PC-3 (cell line): ENCODE measurements at regions of chr14 and their contacts with region 1.

Region 1: GRCh38 chr14:53953002-53953827 is 3.4 kb downstream of the BMP4 start:
- DNase-seq: peak; percentile 88
- ATAC-seq: peak; percentile 75
- H3K4me3 ChIP-seq: peak overlapping the region; percentile 91
- H3K27ac ChIP-seq: peak overlapping the region; percentile 31; the same call in 1 of the 2 replicates
- H3K4me1 ChIP-seq: 0 out of 2 replicates have a peak, but pooled peaks cover 4% of the 10 kb centered on the region
- H3K27me3 ChIP-seq: no peaks in the 10 kb centered on the region
- CTCF ChIP-seq: no peak

Region 2: GRCh38 chr14:53432378-53432802 is 520.8 kb before region 1 on chr14:
- CTCF ChIA-PET with region 1: no interaction called
- POLR2A ChIA-PET with region 1: no interaction called
- intact Hi-C with region 1: loop called (anchors 10 kb)
- DNase-seq: peak; percentile 77
- ATAC-seq: peak; percentile 95
- H3K4me3 ChIP-seq: no peak overlapping the region
- H3K27ac ChIP-seq: no peak overlapping the region
- H3K4me1 ChIP-seq: peaks cover 18% of the 10 kb centered on the region
- H3K27me3 ChIP-seq: no peaks in the 10 kb centered on the region
- CTCF ChIP-seq: peak; percentile 96

Region 3: DNA sequence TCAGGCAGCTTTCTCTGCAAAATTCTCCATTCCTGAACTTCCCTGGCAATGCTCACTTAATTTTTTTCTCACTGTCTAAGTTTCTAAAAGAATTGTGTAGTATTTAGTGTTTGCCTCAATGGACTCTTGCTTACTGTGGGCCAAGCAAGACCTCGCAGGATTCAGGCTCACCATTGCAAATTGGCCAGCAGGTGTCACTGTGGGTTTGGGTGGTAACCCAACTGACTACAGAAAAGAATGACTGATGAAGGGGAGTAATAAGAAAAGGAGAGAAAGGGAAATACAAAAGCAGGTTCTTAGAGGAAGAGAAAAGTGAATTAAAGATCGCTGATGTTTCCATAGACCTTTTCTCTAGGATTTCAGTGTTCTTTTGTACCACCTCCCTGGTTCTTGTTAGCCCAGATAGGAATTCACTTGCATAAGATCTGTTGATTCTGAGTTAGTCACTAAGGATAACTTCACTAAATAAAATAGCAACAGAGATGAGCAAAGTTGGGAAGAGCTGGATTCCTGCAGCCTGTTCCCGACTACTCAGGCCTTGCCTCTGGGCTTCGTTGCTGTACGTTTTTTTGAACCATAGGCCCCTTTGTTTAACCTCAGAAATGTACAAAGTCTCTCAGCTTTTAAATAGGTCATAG is 413.6 kb before region 1 on chr14:
- CTCF ChIA-PET with region 1: no interaction called
- POLR2A ChIA-PET with region 1: interaction called, 3 read pairs
- intact Hi-C with region 1: loop called (anchors 1 kb)
- DNase-seq: peak; percentile 92
- ATAC-seq: peak; percentile 62
- H3K4me3 ChIP-seq: no peak overlapping the region
- H3K27ac ChIP-seq: peak overlapping the region; percentile 3; the same call in 1 of the 2 replicates
- H3K4me1 ChIP-seq: peaks cover 26% of the 10 kb centered on the region
- H3K27me3 ChIP-seq: no peaks in the 10 kb centered on the region
- CTCF ChIP-seq: peak; percentile 98

Region 4: GRCh38 chr14:53663709-53664108 is 289.5 kb before region 1 on chr14:
- CTCF ChIA-PET with region 1: interaction called, 3 read pairs
- POLR2A ChIA-PET with region 1: no interaction called
- intact Hi-C with region 1: loop called (anchors 5 kb)
- DNase-seq: peak; percentile 53
- ATAC-seq: peak; percentile 93
- H3K4me3 ChIP-seq: no peak overlapping the region
- H3K27ac ChIP-seq: no peak overlapping the region
- H3K4me1 ChIP-seq: no peaks in the 10 kb centered on the region
- H3K27me3 ChIP-seq: peaks cover 2% of the 10 kb centered on the region; the same call in 1 of the 2 replicates
- CTCF ChIP-seq: peak; percentile 70

Region 5: DNA sequence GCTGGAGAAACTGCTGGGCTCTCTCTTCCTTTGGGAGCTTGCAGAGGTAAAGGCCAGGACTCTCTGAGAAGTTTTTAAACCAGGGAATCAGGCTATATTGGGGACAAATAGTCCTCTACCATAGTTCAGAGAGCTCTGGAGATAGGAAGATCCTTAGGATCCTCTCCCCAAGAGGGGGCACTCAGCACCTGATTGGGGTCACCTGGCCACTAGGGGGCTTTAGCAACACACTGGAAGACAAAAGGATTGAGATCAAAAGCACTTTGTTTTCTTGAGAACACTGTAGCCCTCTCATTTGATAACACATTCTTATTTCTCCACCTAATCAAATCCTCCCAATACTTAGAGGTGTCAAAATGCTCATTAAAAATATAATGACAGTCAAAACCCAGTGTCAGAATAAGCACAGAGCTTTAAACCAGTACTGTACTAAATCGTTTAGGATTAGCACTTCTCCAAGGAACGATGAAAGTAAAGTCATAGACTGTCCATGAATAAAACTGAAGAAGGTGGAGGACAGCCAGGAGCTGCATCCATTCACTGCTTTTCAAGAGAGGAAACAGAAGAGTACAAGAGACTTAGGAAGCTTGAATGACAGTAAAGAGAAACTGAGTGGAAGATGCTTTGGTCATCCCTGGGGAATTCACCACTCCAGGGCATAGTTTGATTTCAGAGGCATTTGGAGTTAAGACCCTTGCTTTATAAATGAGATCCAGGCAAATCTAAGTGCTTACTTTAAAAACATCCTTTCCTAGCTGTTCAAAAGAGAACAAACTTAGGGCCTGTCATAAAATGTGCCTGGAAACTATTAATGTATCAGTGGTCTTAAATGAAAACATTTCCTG is 23.1 kb before region 1 on chr14:
- CTCF ChIA-PET with region 1: interaction called, 6 read pairs
- POLR2A ChIA-PET with region 1: no interaction called
- intact Hi-C with region 1: loop called (anchors 2 kb)
- DNase-seq: peak; percentile 68
- ATAC-seq: peak; percentile 68
- H3K4me3 ChIP-seq: no peak overlapping the region
- H3K27ac ChIP-seq: no peak overlapping the region
- H3K4me1 ChIP-seq: peaks cover 25% of the 10 kb centered on the region
- H3K27me3 ChIP-seq: no peaks in the 10 kb centered on the region
- CTCF ChIP-seq: peak; percentile 94

Region 6: DNA sequence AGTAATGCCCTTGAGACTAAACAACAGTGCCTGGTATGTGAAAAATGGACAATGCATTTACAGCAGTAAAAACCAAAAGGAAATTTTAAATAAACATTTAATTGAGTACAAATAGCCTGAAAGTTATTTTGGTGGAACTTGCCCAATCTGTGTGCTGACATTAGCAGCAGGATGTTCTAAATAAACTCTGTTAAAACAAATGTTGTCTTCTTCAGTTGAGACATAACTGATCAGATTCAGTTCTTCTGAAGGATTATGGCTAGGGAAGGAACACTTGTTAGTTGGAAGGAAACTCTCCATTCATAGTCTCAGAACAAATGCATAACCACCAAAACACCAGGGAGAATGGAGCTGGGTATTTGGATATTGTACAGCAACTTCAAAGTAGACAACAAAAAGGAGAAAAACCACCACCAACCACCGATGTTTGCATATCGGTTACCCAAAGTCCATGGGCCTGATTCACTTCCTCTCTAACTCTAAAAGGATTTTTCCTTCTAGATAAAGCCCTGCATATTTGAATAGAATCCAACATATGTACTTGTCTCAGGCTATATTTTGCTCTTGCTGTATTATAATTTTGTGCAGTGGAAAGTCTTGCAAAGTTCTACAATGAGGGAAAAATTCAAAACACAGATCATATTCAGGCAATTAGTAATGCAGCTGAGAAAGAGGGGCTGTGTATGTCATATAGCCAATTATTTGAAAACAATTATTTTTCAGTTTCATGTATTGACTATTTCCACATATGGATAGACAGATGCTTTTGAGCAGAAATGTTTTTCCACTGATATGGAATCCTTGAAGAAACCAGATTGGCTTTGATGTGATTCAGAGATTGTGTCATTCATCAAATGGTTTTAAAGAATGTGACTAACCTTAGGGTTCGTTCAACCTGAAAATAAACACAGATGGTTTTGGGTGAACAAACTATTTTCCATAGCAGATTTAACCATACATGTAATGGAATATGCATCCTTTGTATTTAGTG is 155.6 kb after region 1 on chr14:
- CTCF ChIA-PET with region 1: interaction called, 4 read pairs
- POLR2A ChIA-PET with region 1: interaction called, 9 read pairs
- intact Hi-C with region 1: loop called (anchors 5 kb)
- DNase-seq: peak; percentile 100
- ATAC-seq: peak; percentile 56
- H3K4me3 ChIP-seq: peak overlapping the region; percentile 6; the same call in 1 of the 2 replicates
- H3K27ac ChIP-seq: peak overlapping the region; percentile 88
- H3K4me1 ChIP-seq: peaks cover 75% of the 10 kb centered on the region
- H3K27me3 ChIP-seq: no peaks in the 10 kb centered on the region
- CTCF ChIP-seq: no peak

Region 7: DNA sequence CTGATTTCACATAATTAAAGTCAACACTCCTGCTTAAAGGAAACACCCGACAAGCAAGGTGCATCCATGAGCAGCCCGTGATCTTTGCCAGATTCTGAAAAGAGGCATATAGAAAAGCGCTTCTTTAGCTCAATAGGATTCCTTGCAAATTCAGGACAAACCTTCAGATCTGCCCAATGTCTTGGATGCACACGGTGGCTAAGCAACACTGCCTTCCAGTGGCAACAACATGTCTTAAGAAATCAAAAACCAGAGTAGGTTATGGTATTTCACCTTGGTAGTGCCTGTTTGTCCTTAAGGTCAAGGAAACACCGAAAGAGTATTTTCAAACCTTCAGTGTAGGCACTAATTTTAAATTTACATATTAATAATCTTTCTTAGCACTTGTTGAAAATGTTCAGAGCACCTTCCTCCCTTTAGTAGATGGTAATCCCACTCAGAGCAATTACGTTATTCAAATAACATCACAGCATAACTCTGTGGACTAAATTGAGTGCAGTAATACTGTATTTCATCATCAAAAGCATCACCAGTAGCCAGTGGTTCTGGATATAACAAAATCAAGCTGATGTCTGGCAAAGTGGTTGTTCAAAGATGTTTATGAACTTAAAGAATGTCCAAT is 385.6 kb after region 1 on chr14:
- CTCF ChIA-PET with region 1: interaction called, 7 read pairs
- POLR2A ChIA-PET with region 1: interaction called, 8 read pairs
- intact Hi-C with region 1: loop called (anchors 2 kb)
- DNase-seq: peak; percentile 93
- ATAC-seq: peak; percentile 79
- H3K4me3 ChIP-seq: no peak overlapping the region
- H3K27ac ChIP-seq: no peak overlapping the region
- H3K4me1 ChIP-seq: peaks cover 35% of the 10 kb centered on the region
- H3K27me3 ChIP-seq: no peaks in the 10 kb centered on the region
- CTCF ChIP-seq: peak; percentile 99